Colonic mucosa (tissue), 4 donors: ENCODE measurements at regions of chr11 and their contacts with region 1.

Region 1: GRCh38 chr11:125338886-125339811 is 156.9 kb downstream of the FEZ1 start:
- DNase-seq: no peak
- H3K4me3 ChIP-seq: no peak overlapping the region
- H3K27ac ChIP-seq: no peak overlapping the region
- H3K4me1 ChIP-seq: no peaks in the 10 kb centered on the region
- H3K27me3 ChIP-seq: no peaks in the 10 kb centered on the region
- CTCF ChIP-seq: no peak

Region 2: GRCh38 chr11:125275905-125276618 is 63.1 kb before region 1 on chr11:
- intact Hi-C with region 1: loop called (anchors 10 kb)
- DNase-seq: no peak
- H3K4me3 ChIP-seq: no peak overlapping the region
- H3K27ac ChIP-seq: no peak overlapping the region
- H3K4me1 ChIP-seq: no peaks in the 10 kb centered on the region
- H3K27me3 ChIP-seq: no peaks in the 10 kb centered on the region
- CTCF ChIP-seq: no peak

Region 3: DNA sequence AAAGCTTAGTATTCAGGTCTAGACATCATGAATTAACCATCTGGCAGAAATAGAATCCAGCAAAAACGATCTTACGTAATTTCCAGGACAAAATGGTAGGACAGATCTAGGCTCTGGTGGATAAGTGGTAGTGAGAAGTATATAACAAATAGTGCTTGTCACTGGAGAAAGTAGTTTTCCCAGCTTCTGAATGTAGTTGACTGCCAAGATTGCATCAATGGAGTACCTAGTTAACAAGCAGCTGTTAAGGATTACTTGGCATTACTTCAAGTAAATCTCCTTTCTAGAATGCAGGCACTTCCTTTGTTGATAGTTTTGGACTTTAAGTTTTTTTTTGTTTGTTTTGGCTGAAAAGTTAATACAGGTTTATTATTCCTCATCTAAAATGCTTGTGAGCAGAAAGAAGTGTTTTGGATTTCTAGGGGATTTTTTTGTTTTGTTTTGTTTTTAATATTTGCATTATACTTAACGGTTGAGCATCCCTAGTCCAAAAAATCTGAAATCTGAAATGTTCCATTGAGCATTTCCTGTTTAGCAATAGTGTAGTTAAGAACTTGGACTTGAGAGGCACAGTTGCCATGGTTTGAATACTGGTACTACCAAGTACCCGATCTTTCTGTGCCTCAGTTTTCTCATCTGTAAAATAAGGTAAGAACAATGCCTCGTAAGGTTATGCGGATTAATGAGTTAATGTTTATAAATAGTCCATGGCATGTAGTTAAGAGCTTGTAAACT is 892.7 kb after region 1 on chr11:
- intact Hi-C with region 1: no loop called
- DNase-seq: no peak
- H3K4me3 ChIP-seq: no peak overlapping the region
- H3K27ac ChIP-seq: no peak overlapping the region
- H3K4me1 ChIP-seq: no peaks in the 10 kb centered on the region
- H3K27me3 ChIP-seq: no peaks in the 10 kb centered on the region
- CTCF ChIP-seq: no peak